ENCODE measurements at regions of chr2 and their contacts with region 1.

Region 1: DNA sequence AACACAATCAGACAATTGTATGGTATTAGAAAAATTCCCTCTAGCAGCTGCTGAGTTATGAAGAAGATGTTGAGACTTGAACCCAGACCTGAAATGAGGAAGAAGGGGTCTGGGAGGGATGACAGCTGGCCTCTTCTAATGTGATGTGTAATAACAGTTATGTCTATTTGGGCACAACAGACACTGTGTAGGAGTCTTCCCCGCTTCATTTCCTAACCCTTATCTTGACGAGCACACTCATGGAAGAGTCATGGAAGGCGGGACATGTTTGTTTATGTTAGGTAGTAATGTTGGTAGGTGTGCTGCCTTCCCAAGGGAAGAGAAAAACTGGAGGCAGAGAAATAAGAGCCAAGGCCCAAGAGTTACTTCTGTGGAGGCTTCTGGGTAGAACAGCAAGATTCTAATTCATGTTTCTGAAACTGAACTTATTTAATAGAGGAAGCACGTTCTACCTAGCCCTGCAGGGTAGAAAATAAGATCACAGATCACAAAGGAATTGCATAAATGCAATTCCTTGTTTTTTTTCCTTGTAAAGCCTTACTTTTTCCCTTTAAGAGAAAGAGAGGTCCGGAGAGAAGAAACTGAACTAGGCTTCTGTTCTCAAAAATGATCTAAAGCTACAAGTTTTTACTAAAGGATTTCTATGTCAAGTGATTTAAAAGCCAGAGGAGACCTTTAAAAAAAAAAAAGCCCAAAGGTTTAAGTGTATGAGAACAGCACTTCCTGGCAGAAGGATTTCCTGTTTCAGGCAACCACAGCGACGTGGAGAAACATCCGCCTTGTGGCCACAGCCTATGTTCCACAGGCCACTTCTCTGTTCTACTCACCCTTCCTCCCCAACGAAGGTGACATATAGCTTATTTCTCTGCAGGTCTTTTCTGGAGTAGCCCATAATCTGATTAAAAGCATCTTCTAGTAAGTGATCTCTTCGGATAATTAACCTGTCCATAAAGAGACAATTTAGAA is 68.5 kb upstream of the STK17B start:
- DNase-seq: peak; percentile 83
- H3K4me3 Mint-ChIP-seq: peak overlapping the region; percentile 60
- H3K27ac Mint-ChIP-seq: peak overlapping the region; percentile 97
- H3K4me1 Mint-ChIP-seq: peaks cover 76% of the 10 kb centered on the region
- H3K27me3 Mint-ChIP-seq: no peaks in the 10 kb centered on the region

Region 2: DNA sequence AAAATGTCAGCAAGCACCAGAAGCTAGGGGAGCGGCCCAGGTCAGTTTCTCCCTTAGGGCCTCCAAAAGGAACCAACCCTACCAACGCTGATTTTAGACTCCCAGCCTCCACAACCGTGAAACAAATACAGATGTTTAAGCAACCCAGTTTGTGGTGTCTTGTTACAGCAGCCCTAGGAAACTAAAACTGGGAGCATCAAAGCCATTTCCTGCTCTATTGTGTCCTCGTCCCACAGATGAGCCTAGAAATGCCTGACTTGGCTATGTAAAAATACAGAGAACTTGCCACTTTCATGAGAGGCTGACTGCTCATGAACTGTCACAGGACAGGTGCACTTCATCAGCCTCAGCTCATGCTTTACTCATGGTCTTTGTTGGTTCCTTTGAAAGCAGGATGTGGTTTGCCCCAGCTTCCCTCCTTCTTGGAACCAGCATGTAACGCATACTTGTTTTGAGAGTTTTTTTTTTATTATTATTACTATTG is 680.4 kb before region 1 on chr2:
- intact Hi-C with region 1: loop called (anchors 1 kb)
- DNase-seq: peak; percentile 81
- H3K4me3 Mint-ChIP-seq: peak overlapping the region; percentile 77
- H3K27ac Mint-ChIP-seq: peak overlapping the region; percentile 96
- H3K4me1 Mint-ChIP-seq: peaks cover 62% of the 10 kb centered on the region
- H3K27me3 Mint-ChIP-seq: no peaks in the 10 kb centered on the region

Region 3: DNA sequence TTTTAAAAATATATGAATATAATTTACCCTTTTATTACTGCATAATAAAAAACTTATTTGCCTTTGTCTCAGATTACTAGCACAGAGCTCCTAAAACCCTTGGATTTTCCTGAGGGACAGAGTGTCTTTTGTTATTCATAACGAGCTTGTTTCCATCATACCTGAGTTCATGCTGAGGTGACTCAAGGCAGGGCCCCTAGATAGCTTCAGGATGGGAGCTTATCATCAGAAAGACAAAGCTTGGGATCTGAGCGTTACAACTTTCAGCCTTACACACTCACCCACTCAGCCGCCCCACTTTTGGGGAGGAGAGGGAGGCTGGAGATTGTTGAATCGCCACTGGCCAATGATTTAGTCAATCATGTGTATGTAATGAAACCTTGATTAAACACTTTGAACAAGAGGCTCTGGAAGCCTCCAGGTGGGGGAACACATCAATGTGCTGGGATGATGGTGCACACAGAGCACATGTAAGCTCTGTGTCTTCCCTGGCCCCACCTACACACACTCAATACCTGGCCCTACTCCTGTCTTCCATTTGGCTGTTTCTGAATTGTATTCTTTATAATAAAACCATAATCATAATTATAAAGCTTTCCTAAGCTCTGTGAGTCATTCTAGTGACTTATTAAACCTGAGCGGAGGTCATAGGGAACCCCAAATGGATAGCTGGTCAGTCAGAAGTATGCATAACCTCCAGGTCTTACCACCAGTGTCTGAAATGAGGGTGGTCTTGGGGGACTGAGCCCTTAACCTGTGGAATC is 142.7 kb before region 1 on chr2:
- intact Hi-C with region 1: no loop called
- DNase-seq: no peak
- H3K4me3 Mint-ChIP-seq: no peak overlapping the region
- H3K27ac Mint-ChIP-seq: no peak overlapping the region
- H3K4me1 Mint-ChIP-seq: peaks cover 14% of the 10 kb centered on the region
- H3K27me3 Mint-ChIP-seq: no peaks in the 10 kb centered on the region

Region 4: DNA sequence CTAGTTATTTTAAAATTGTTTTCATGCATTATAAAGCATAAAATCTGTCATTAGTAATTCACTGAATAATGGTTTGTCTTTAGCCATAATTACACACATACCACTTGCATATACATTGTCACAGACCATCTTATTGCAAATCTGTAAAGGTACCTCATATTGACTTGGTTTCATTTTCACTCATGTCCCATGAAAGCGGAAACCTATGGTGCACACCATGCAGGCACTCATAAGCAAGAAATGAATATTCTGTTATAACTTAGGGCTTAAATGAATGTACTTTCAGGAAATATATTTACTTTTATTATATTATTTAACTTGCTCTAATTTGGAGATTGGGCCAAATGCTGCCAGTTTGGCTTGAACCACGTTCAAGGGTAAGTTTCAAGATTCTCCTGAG is 39.3 kb before region 1 on chr2:
- intact Hi-C with region 1: loop called (anchors 1 kb)
- DNase-seq: peak; percentile 41
- H3K4me3 Mint-ChIP-seq: peak overlapping the region; percentile 54
- H3K27ac Mint-ChIP-seq: peak overlapping the region; percentile 87
- H3K4me1 Mint-ChIP-seq: peaks cover 49% of the 10 kb centered on the region
- H3K27me3 Mint-ChIP-seq: no peaks in the 10 kb centered on the region

Region 5: DNA sequence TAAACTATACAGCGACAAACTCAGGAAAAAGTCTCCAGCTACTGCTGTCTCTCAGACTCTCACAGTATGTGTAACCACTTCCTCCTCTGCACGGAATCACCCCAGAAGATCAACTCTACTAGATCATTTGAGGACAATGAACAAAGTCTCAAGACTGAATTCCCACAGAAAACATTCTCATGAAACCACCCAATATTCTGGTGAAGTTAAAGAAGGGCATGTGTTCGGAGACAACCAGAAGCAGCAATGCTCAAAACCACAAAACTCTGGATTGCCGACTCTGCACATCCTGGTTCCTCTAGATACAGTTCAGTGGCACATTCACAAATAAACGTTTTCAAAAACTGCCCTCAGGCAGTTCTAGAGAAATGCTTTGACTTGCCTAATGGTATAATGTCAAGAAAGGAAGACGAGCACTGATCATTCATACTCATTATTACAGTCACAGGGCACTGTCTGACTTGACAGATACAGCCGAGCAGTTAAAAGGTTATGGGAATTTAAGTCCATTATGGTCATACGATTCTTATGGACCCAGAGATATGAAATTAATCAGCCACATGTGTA is 23.4 kb after region 1 on chr2:
- intact Hi-C with region 1: loop called (anchors 1 kb)
- DNase-seq: peak; percentile 57
- H3K4me3 Mint-ChIP-seq: peak overlapping the region; percentile 65
- H3K27ac Mint-ChIP-seq: peak overlapping the region; percentile 88
- H3K4me1 Mint-ChIP-seq: peaks cover 79% of the 10 kb centered on the region
- H3K27me3 Mint-ChIP-seq: no peaks in the 10 kb centered on the region

Region 6: GRCh38 chr2:196277002-196277401 is 37.1 kb after region 1 on chr2:
- intact Hi-C with region 1: loop called (anchors 1 kb)
- DNase-seq: no peak
- H3K4me3 Mint-ChIP-seq: no peak overlapping the region
- H3K27ac Mint-ChIP-seq: no peak overlapping the region
- H3K4me1 Mint-ChIP-seq: peaks cover 44% of the 10 kb centered on the region
- H3K27me3 Mint-ChIP-seq: no peaks in the 10 kb centered on the region

Region 7: DNA sequence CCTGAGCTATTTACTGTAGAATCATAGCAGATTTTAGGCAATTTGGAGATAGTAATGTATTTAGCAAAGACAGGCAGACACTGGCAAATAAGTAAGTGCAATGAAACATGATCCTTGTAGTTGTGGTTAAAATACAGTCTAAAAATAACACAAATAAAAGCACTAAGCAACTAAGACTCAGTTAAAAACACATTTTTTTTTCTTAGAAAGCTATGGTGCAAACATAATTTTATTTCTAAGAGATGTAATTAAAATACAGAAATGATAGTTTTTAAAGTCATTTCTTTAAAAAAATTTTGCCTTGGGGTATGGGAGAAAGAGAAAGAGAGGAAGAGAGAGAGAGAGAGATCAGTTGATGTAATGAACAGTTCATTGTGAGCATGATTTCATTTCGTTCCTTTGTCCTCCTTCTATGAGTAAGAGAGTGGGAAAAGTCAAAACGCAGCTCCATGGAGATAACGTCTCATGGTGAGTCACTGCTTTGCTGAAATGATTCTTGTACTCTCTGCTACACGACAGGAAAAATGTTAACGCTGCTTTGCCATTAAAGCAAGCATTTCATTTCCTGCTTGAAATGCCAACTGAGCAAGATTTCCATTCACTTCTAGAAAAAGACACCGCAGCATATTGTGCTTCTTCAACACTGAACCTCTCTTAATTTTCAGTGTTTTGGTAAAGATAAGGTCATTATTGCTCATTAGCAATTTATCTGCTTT is 747.9 kb after region 1 on chr2:
- intact Hi-C with region 1: loop called (anchors 10 kb)
- DNase-seq: peak; percentile 46
- H3K4me3 Mint-ChIP-seq: peak overlapping the region; percentile 66
- H3K27ac Mint-ChIP-seq: peak overlapping the region; percentile 94
- H3K4me1 Mint-ChIP-seq: peaks cover 62% of the 10 kb centered on the region
- H3K27me3 Mint-ChIP-seq: no peaks in the 10 kb centered on the region